K562 (cell line): ENCODE measurements at regions of chr12 and their contacts with region 1.

Region 1: GRCh38 chr12:103840876-103841689 is at the start of gene NT5DC3:
- DNase-seq: peak; percentile 82 to 93 (median 90)
- ATAC-seq: peak; percentile 88
- H3K4me3 ChIP-seq: peak within 1 kb of the TSS; percentile 81
- H3K27ac ChIP-seq: peak within 1 kb of the TSS; percentile 86
- H3K4me1 ChIP-seq: peaks cover 10 to 25% of the 10 kb centered on the region in 2 experiments; a peak in 4 of 5 replicates
- H3K27me3 ChIP-seq: no peaks in the 10 kb centered on the region
- CTCF ChIP-seq: no peak
- EP300 ChIP-seq: no peak
- POLR2A ChIP-seq: peak; percentile 79
- RAD21 ChIP-seq: no peak
- polyA plus RNA-seq, gene NT5DC3: 14.2 to 33.5 TPM

Region 2: DNA sequence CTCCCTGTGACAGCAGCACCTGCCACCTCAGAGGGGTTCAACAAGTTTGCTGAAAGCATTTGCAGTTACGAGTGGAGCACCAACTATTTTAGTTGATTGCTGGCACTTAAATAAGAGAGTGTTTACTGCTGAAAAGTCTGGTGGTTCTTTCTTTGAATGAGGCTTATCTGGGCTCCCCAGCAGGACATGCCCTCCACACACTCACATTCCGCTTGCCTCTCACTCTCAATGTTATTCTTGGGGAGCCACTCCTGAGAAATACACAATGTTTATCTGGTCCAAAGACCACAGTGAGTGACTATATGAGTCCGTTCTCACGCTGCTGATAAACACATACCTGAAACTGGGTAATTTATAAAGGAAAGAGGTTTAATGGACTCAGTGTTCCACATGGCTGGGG is 31.9 kb before region 1 on chr12:
- CTCF ChIA-PET with region 1: interaction called, 3 read pairs
- POLR2A ChIA-PET with region 1: no interaction called
- in situ Hi-C with region 1: no loop called
- intact Hi-C with region 1: loop called (anchors 2 kb)
- DNase-seq: peak; percentile 35 to 82 (median 60)
- ATAC-seq: peak; percentile 70
- H3K4me3 ChIP-seq: no peak overlapping the region
- H3K27ac ChIP-seq: peak overlapping the region; percentile 69; the same call in 2 of the 3 replicates
- H3K4me1 ChIP-seq: peaks cover 30 to 61% of the 10 kb centered on the region in 2 experiments
- H3K27me3 ChIP-seq: no peaks in the 10 kb centered on the region
- CTCF ChIP-seq: no peak
- EP300 ChIP-seq: peak; percentile 68; the same call in 1 of the 2 replicates
- POLR2A ChIP-seq: no peak
- RAD21 ChIP-seq: no peak

Region 3: GRCh38 chr12:104042580-104042979 is 201.5 kb after region 1 on chr12:
- CTCF ChIA-PET with region 1: no interaction called
- POLR2A ChIA-PET with region 1: no interaction called
- in situ Hi-C with region 1: no loop called
- intact Hi-C with region 1: no loop called
- DNase-seq: no peak
- ATAC-seq: no peak
- H3K4me3 ChIP-seq: no peak overlapping the region
- H3K27ac ChIP-seq: no peak overlapping the region
- H3K4me1 ChIP-seq: no peaks in the 10 kb centered on the region
- H3K27me3 ChIP-seq: peaks cover 22 to 26% of the 10 kb centered on the region in 2 experiments
- CTCF ChIP-seq: no peak
- EP300 ChIP-seq: no peak
- POLR2A ChIP-seq: no peak
- RAD21 ChIP-seq: no peak

Region 4: DNA sequence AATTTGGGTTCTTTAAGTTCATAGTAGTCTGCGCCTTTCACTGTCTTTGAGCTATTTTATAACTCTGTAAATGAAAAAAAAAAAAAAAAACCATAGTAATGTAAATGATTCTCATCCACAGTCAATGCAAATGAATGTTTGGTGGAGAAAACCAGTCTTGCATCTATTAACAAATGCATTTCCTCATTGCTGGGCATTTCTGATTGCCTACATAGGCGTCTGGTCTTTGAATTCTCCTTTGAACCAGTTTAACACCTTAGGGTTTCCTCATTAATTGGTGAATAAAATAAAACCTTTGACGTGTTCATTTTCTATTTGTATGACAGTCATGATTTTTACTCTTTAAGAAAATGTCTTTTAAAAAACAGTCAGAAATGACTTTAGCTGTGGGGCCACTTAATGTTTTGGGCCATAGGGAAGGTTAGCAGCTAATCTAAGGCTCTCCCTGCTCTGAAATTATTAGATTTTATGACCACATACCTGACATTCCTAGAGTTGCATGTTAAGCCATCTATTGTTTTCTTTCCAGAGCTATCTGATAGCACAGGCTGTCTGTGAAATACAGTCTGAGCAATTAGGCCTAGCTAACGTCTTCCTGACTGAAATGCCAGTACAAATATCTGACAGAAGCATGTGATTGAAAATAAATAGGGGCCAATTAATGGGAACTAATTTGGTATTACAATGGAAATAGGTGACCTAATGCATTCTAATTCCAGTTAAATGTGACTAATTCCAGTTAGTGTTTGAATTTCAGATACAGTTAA is 1604.3 kb after region 1 on chr12:
- CTCF ChIA-PET with region 1: no interaction called
- POLR2A ChIA-PET with region 1: no interaction called
- in situ Hi-C with region 1: no loop called
- intact Hi-C with region 1: no loop called
- DNase-seq: no peak
- ATAC-seq: no peak
- H3K4me3 ChIP-seq: no peak overlapping the region
- H3K27ac ChIP-seq: no peak overlapping the region
- H3K4me1 ChIP-seq: no peaks in the 10 kb centered on the region
- H3K27me3 ChIP-seq: no peaks in the 10 kb centered on the region
- CTCF ChIP-seq: no peak
- EP300 ChIP-seq: no peak
- POLR2A ChIP-seq: no peak
- RAD21 ChIP-seq: no peak